Prostate gland (tissue), 2 donors: ENCODE measurements at regions of chr7 and their contacts with region 1.

Region 1: DNA sequence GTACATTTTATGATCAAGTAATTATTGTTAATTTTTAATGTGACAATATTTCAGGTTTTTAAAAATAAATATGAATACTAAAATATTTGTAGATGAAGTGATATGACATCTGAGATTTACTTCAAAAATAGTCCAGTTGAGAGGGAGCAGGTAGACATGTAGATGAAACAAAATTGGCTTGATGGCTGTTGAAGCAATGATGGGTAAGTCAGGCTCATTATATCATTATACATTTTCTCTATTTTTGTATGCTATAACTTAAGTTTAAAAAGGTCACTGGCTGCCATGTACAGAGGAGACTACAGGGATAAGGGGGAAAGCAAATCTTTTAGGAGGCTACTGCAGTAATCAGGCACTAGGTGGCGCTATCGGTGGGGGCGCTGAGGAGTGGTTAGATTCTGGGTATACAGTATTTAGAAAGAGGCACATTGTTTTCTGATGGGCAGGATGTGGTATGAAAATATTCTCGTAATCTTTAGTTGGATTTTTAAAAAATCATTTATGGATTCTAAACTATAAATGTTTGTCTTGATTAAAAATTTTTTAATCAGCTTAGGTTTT is 189.8 kb upstream of the IMMP2L start:
- DNase-seq: no peak
- H3K4me3 ChIP-seq: no peak overlapping the region
- H3K27ac ChIP-seq: no peak overlapping the region
- H3K4me1 ChIP-seq: no peaks in the 10 kb centered on the region
- H3K27me3 ChIP-seq: no peaks in the 10 kb centered on the region
- CTCF ChIP-seq: peak in 3 of 4 experiments; percentile 45 to 57 (median 52)
- POLR2A ChIP-seq: no peak

Region 2: DNA sequence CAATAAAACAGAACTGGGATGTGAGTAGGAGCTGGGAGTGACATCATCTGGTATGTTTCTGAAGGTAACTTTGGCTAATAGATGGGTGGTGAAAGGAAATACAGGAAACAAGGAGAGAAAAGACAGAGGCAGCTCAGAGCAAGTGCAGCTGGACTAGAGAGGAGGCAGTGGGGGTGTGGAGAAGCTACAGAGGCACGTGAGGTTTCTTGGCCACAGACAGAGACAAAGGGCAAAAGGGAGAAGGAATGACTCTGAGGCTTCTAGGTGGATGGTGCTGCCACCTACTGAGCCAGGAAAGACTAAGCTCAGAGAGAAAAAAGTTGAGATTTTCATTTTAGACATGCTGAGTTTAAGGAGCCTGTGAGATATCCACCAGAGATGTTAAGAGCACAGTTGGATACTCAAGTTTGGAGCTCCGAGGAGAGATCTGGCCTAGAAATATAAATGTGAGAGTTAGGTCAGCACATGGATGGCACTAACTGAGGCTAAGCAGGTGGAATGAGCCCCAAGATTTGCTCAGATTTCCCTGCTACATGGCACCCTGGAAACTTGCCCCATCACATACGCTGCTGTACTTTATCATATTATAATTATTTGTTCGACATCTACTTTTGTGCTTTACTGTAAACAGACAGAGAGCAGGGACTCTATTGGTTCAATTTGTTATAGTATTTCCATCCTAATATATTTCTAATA is 103.2 kb after region 1 on chr7:
- intact Hi-C with region 1: loop called (anchors 5 kb)
- DNase-seq: peak; percentile 44
- H3K4me3 ChIP-seq: no peak overlapping the region
- H3K27ac ChIP-seq: peak overlapping the region in 1 of 2 donors; percentile 12
- H3K4me1 ChIP-seq: no peaks in the 10 kb centered on the region
- H3K27me3 ChIP-seq: no peaks in the 10 kb centered on the region
- CTCF ChIP-seq: peak; percentile 9 to 52 (median 33)
- POLR2A ChIP-seq: no peak

Region 3: DNA sequence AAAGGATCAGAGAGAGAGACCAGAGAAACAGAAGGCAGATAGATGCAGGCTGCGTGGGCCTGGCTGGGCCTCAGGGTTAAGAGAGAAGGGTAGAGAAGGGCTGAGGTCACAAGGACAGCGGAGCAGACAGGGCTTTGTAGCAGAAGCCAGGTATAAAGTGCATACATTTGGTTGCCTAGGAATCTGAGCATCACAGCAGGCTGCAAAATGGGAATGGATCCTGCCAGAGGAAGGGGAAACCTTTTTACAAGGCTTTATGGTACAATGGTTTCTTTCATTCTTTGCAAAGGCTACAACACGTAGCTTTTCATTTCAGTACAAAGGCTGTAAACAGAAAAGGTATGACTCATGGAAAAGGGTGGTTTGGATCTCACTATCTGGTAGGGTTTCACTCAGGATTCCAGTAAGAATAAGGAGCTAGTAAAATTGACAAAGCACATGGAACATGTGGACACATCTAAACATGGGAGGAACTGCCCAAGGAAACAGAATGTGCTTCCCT is 179.0 kb after region 1 on chr7:
- intact Hi-C with region 1: no loop called
- DNase-seq: no peak
- H3K4me3 ChIP-seq: no peak overlapping the region
- H3K27ac ChIP-seq: no peak overlapping the region
- H3K4me1 ChIP-seq: no peaks in the 10 kb centered on the region
- H3K27me3 ChIP-seq: no peaks in the 10 kb centered on the region
- CTCF ChIP-seq: no peak
- POLR2A ChIP-seq: no peak